Heart left ventricle (tissue), 16 donors: ENCODE measurements at regions of chr15 and their contacts with region 1.

Region 1: GRCh38 chr15:68730471-68730919 is 90.2 kb downstream of the ANP32A start:
- DNase-seq: peak in 4 of 5 donors; percentile 43 to 62 (median 58)
- ATAC-seq: peak; percentile 32 to 59 (median 46)
- H3K4me3 ChIP-seq: peak overlapping the region in 1 of 12 donors; percentile 3
- H3K27ac ChIP-seq: peak overlapping the region; percentile 19 to 86 (median 72)
- H3K4me1 ChIP-seq: peaks cover 3 to 79% (median 49%) of the 10 kb centered on the region in 12 donors
- H3K27me3 ChIP-seq: no peaks in the 10 kb centered on the region
- CTCF ChIP-seq: peak; percentile 13 to 76 (median 58)
- POLR2A ChIP-seq: no peak

Region 2: DNA sequence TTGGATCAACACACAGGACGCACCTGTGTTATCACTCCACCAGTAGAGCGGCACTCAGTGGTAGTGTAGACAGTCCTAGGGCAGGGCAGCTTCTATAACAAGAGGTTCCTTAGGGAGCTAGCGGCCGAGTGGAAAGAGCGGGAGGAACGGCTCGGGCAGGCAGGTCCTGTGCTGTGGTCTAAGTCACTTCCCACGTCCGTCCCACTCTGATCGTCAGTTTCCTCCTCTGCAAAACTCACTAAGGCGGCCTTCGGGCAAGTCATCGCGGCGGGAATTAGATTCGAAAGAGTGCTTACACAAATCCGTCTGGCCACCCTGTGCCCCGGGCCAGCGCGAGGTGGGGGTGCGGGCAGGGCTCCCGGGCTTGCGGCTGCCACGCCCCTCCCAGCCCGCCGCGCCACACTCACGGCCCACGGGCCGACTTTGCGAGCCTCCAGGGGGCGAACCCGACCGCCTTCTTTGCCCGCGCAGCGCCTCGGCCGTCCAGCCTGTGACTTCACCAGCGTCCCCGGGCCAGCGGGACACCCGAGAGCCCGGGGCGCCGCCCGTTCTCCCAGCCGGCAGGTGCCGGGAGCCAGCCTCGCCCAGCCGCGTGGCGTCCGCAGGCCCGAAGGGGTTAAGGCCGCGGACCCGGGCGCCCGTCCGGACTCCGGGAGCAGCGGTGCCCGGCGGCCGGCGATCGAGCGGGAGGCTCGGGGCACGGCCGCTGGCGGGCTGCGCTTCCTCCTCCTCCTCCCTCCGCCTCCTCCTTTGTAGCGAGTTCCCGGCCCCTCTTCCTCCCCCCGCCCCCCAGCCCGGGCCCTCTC is 152.1 kb before region 1 on chr15:
- intact Hi-C with region 1: loop called in 1 of 10 experiments (anchors 5 kb)
- DNase-seq: peak; percentile 77 to 88 (median 80)
- ATAC-seq: peak; percentile 32 to 86 (median 80)
- H3K4me3 ChIP-seq: peak overlapping the region; percentile 42 to 93 (median 69)
- H3K27ac ChIP-seq: peak overlapping the region; percentile 60 to 93 (median 80)
- H3K4me1 ChIP-seq: peaks cover 0 to 34% (median 18%) of the 10 kb centered on the region in 12 donors
- H3K27me3 ChIP-seq: peaks cover 0 to 25% (median 0%) of the 10 kb centered on the region in 9 donors
- CTCF ChIP-seq: peak; percentile 34 to 81 (median 68)
- POLR2A ChIP-seq: peak in 1 of 2 donors; percentile 27

Region 3: DNA sequence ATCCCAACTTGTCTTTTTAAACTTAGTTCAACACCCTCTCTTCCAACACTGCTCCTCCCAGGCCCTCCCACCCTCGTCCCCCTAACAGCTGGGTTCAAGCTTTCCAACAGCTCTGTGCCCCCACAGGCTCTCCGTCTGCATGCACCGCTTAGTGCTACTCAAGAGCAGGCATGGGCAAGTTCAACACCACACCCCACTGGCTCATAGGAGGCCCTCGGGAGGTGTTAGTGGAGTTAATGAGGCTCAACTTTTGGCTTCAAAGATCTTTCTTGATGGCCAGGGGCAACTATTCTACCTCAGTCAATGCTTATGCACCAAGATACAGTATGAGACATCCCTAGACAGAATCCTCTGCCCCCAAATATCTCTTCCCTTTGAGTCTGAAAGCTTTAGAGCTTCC is 24.2 kb before region 1 on chr15:
- intact Hi-C with region 1: loop called in 1 of 10 experiments (anchors 2 kb)
- DNase-seq: no peak
- ATAC-seq: no peak
- H3K4me3 ChIP-seq: no peak overlapping the region
- H3K27ac ChIP-seq: peak overlapping the region in 1 of 12 donors; percentile 59
- H3K4me1 ChIP-seq: peaks cover 0 to 83% (median 54%) of the 10 kb centered on the region in 12 donors
- H3K27me3 ChIP-seq: no peaks in the 10 kb centered on the region
- CTCF ChIP-seq: no peak
- POLR2A ChIP-seq: no peak

Region 4: GRCh38 chr15:68775671-68776476 is 45.4 kb after region 1 on chr15:
- intact Hi-C with region 1: loop called in 3 of 10 experiments (anchors 5 kb)
- DNase-seq: peak; percentile 86 to 92 (median 88)
- ATAC-seq: peak; percentile 77 to 94 (median 89)
- H3K4me3 ChIP-seq: no peak overlapping the region
- H3K27ac ChIP-seq: peak overlapping the region; percentile 2 to 89 (median 59)
- H3K4me1 ChIP-seq: peaks cover 0 to 35% (median 22%) of the 10 kb centered on the region in 12 donors
- H3K27me3 ChIP-seq: no peaks in the 10 kb centered on the region
- CTCF ChIP-seq: no peak
- POLR2A ChIP-seq: no peak

Region 5: DNA sequence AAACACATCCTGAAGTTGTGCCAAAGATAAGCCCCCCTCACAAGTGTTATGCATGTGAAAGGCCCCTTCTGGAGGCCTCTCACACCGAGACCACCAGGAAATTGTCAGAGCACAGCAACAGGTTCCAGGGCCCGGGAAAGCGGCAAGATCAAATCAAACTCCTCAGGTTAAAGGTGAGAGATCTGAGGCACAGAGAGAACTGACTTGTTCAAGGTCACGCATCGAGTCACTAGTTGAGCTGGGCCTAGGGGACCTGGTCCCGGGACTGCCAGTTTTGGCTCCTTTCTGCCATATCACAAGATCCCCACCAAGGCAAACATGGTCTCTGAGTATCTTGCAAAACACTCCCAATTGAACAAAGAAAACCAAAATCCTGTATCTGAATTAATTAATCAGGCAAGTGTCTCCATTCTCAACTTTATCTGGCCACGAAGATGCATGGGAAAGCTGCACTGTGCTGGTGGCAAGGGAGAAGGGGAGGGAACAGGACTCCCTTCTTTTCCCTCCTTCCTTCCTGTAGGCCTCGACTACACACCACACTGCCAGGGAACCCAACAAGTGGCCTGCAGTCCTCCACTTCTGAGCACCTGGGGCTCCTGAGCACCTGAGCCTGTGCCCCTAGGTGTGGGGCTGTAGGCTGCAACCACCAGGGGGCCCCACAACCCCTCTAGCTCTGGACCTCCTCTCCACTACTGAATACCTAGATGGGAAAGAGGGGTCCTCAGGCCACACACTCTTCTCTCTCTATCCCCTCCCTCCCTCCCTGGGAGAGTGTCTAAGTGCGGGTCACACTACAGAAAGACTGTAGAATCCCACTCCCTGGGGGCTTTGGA is 52.9 kb after region 1 on chr15:
- intact Hi-C with region 1: loop called in 3 of 10 experiments (anchors 5 kb)
- DNase-seq: peak in 2 of 5 donors; percentile 45 to 68
- ATAC-seq: peak in 3 of 4 donors; percentile 38 to 58 (median 41)
- H3K4me3 ChIP-seq: no peak overlapping the region
- H3K27ac ChIP-seq: peak overlapping the region in 4 of 12 donors; percentile 28 to 87 (median 68)
- H3K4me1 ChIP-seq: peaks cover 0 to 49% (median 23%) of the 10 kb centered on the region in 12 donors
- H3K27me3 ChIP-seq: no peaks in the 10 kb centered on the region
- CTCF ChIP-seq: peak; percentile 50 to 69 (median 62)
- POLR2A ChIP-seq: no peak

Region 6: GRCh38 chr15:68820295-68821189 is 90.0 kb after region 1 on chr15 and contains the start of gene ANP32A:
- intact Hi-C with region 1: loop called (anchors 1 to 10 kb)
- DNase-seq: peak; percentile 97 to 99 (median 99)
- ATAC-seq: peak; percentile 81 to 92 (median 88)
- H3K4me3 ChIP-seq: peak within 1 kb of the TSS; percentile 80 to 98 (median 94)
- H3K27ac ChIP-seq: peak within 1 kb of the TSS; percentile 97 to 100 (median 100)
- H3K4me1 ChIP-seq: peaks cover 0 to 30% (median 19%) of the 10 kb centered on the region in 12 donors
- H3K27me3 ChIP-seq: no peaks in the 10 kb centered on the region
- CTCF ChIP-seq: no peak
- POLR2A ChIP-seq: peak in 1 of 2 donors; percentile 88
- total RNA-seq, gene ANP32A: 55.7 to 202 (median 142) TPM

Region 7: GRCh38 chr15:68829068-68829467 is 98.6 kb after region 1 on chr15:
- intact Hi-C with region 1: loop called in 6 of 10 experiments (anchors 5 to 10 kb)
- DNase-seq: no peak
- ATAC-seq: peak in 3 of 4 donors; percentile 71 to 83 (median 81)
- H3K4me3 ChIP-seq: no peak overlapping the region
- H3K27ac ChIP-seq: no peak overlapping the region
- H3K4me1 ChIP-seq: peaks cover 0 to 12% (median 0%) of the 10 kb centered on the region in 12 donors
- H3K27me3 ChIP-seq: no peaks in the 10 kb centered on the region
- CTCF ChIP-seq: peak; percentile 39 to 68 (median 56)
- POLR2A ChIP-seq: no peak

Region 8: DNA sequence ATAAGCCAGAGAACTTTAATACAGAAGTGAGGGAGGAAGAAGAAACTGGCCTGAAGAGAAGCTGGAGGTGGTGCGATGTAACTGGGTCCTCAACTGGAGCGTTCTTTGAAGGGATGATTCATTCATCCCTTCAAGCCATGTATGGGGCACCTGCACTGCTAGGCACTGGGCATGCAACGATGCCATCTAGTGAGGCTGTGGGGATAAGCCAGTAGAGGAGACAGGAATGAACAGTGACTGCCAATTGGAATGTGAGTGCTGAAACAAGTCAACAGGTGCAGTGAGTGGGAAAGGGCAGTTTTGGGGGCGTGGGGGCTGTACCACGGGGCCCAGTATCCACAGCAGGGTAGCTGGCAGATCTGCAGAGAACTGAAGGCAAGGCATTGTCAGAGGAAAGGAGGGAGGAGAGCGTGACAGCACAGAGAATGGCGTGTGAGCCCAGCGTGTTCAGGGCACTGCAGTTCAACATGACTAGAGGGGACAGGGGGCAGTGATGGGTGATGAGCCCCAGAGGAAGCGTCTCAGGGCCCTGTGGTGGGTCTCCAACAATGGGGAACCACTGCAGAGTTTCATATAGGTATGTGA is 679.9 kb after region 1 on chr15:
- intact Hi-C with region 1: no loop called
- DNase-seq: peak in 1 of 5 donors; percentile 54
- ATAC-seq: peak in 3 of 4 donors; percentile 52 to 71 (median 60)
- H3K4me3 ChIP-seq: no peak overlapping the region
- H3K27ac ChIP-seq: no peak overlapping the region
- H3K4me1 ChIP-seq: peaks cover 0 to 14% (median 2%) of the 10 kb centered on the region in 12 donors
- H3K27me3 ChIP-seq: no peaks in the 10 kb centered on the region
- CTCF ChIP-seq: peak in 5 of 12 donors; percentile 14 to 27 (median 18)
- POLR2A ChIP-seq: no peak